ENCODE measurements at regions of chr5 and their contacts with region 1.

Region 1: DNA sequence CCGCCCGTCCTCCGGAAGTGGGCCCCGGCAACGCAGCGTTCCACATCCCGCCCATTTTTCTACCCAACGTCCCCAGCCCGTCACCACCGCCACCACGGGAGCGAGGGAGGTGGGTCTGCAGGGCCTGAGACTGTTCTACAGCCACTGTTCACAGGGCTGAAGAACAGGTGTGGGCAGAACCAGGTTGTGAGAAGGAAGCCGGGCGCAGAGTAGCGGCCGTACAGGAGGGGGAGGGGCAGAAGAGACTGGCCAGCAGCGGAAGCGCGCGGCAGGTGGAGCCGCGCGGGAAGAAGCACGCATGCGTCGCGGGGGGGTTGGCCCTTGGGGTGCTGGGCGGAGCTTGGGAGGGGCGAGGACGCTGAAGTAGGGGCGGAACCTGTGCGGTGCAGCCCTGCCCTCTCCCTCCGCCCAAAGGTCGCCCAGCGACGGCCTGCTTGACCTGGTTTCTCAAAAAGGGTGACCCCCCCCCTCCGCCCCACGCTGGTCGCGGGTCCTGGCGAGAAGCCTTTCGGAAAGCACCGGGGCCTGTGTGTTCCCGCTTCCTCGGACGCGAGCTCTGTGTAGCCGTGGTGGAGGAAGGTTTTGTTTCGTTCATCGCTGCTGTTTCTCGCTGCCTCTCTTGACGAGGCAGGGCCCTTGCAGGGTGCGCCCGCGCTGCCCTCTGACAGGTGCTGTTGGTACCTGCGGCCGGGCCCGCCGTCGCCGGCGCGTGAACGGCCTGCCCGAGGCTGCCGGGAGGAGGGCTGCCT is 7.8 kb upstream of the MGAT1 start:
- DNase-seq: peak; percentile 90
- ATAC-seq: peak; percentile 91
- H3K4me3 ChIP-seq: peak overlapping the region; percentile 84
- H3K27ac ChIP-seq: peak overlapping the region; percentile 99
- H3K4me1 ChIP-seq: peaks cover 10% of the 10 kb centered on the region
- H3K27me3 ChIP-seq: no peaks in the 10 kb centered on the region
- CTCF ChIP-seq: no peak
- POLR2A ChIP-seq: peak; percentile 73
- RAD21 ChIP-seq: no peak

Region 2: GRCh38 chr5:180831139-180832048 is 21.0 kb after region 1 on chr5:
- CTCF ChIA-PET with region 1: interaction called, 4 read pairs
- POLR2A ChIA-PET with region 1: interaction called, 3 read pairs
- dilution Hi-C with region 1: no loop called
- in situ Hi-C with region 1: no loop called
- intact Hi-C with region 1: loop called (anchors 1 kb)
- DNase-seq: peak; percentile 60
- ATAC-seq: peak; percentile 98
- H3K4me3 ChIP-seq: peak overlapping the region; percentile 90
- H3K27ac ChIP-seq: peak overlapping the region; percentile 89
- H3K4me1 ChIP-seq: peaks cover 9% of the 10 kb centered on the region
- H3K27me3 ChIP-seq: no peaks in the 10 kb centered on the region
- CTCF ChIP-seq: no peak
- POLR2A ChIP-seq: no peak
- RAD21 ChIP-seq: no peak

Region 3: GRCh38 chr5:181001947-181002346 is 191.6 kb after region 1 on chr5:
- CTCF ChIA-PET with region 1: no interaction called
- POLR2A ChIA-PET with region 1: no interaction called
- dilution Hi-C with region 1: no loop called
- in situ Hi-C with region 1: no loop called
- intact Hi-C with region 1: no loop called
- DNase-seq: no peak
- ATAC-seq: no peak
- H3K4me3 ChIP-seq: no peak overlapping the region
- H3K27ac ChIP-seq: no peak overlapping the region
- H3K4me1 ChIP-seq: no peaks in the 10 kb centered on the region
- H3K27me3 ChIP-seq: no peaks in the 10 kb centered on the region
- CTCF ChIP-seq: no peak
- POLR2A ChIP-seq: no peak
- RAD21 ChIP-seq: no peak

Region 4: DNA sequence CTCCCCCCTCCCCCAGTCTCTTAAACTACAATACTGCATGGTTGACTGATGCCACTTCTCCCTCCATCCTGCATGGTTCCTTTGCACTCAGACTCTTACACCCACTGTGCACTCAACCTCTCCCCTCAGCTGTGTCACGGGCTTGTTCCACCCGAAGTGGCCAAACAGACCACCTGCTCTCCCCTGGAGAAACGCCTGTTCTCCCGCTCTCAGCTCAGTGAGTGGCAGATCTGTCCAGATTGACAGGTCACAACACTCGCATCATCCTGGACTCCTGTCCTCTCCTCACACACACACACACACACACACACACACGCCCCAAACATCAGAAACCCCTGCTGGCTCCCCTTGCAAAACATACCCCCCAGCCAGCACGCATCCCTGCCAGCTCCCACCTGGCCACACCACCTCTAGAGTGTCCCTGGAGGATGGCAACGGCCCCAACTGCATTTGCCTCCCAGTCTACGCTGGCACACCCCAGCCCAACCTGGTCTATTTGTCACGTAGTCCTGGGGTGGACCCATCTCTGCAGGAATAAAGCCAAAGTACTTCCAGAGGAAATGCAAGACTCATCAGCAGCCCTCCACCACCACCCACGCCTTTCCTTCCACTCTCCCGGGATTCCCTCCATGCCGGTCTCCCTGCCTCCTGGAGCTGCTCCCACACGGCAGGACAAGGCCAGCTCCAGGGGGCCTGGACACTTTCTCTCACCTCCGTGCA is 317.7 kb after region 1 on chr5:
- CTCF ChIA-PET with region 1: no interaction called
- POLR2A ChIA-PET with region 1: no interaction called
- dilution Hi-C with region 1: no loop called
- in situ Hi-C with region 1: no loop called
- intact Hi-C with region 1: no loop called
- DNase-seq: no peak
- ATAC-seq: no peak
- H3K4me3 ChIP-seq: no peak overlapping the region
- H3K27ac ChIP-seq: no peak overlapping the region
- H3K4me1 ChIP-seq: no peaks in the 10 kb centered on the region
- H3K27me3 ChIP-seq: peaks cover 4% of the 10 kb centered on the region; the same call in 1 of the 2 replicates
- CTCF ChIP-seq: no peak
- POLR2A ChIP-seq: no peak
- RAD21 ChIP-seq: no peak

Region 5: DNA sequence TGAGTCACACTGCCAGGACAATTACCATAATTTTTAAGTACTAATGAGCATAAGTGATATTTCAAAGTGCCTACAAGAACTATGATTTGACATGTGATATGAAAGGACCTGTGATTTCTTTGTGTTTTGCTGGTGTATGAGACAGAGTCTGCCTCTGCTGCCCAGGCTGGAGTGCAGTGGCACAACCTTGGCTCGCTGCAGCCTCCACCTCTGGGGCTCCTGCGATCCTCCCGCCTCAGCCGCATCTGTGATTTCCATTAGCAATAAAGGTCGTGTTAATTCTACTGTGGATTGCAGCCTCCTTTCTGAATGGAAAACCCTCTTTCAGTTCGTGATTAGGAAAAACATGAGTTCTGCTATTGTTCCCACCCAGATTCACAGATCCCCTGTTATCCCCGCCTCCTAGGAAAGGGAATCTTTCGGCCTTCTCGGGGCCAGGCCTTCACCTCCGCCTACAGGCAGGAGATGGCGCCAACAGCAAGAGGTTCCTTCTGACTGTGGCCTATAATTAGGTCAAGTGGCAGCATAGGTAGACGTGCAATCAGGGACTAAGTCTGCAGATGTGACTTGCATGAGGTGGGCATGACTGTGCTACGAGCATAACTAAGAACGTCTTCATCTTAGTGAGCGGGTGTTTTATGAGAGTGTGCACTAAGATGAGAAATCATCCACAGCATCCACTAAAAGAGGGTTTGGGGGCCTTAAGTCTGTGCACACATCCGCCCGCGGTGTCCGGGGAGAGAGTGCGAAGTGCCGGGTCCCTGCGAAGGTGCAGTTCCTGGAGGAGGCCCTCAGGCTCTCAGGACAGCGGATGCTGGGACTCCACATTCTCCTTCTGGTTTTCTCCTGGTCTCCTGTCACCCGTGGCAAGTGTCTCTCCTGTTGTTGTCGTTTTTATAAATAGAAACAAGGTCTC is 371.5 kb after region 1 on chr5:
- CTCF ChIA-PET with region 1: no interaction called
- POLR2A ChIA-PET with region 1: no interaction called
- dilution Hi-C with region 1: no loop called
- in situ Hi-C with region 1: loop called (anchors 10 kb)
- intact Hi-C with region 1: no loop called
- DNase-seq: peak; percentile 65
- ATAC-seq: peak; percentile 69
- H3K4me3 ChIP-seq: no peak overlapping the region
- H3K27ac ChIP-seq: no peak overlapping the region
- H3K4me1 ChIP-seq: no peaks in the 10 kb centered on the region
- H3K27me3 ChIP-seq: no peaks in the 10 kb centered on the region
- CTCF ChIP-seq: peak; percentile 80
- POLR2A ChIP-seq: no peak
- RAD21 ChIP-seq: peak; percentile 79

Region 6: DNA sequence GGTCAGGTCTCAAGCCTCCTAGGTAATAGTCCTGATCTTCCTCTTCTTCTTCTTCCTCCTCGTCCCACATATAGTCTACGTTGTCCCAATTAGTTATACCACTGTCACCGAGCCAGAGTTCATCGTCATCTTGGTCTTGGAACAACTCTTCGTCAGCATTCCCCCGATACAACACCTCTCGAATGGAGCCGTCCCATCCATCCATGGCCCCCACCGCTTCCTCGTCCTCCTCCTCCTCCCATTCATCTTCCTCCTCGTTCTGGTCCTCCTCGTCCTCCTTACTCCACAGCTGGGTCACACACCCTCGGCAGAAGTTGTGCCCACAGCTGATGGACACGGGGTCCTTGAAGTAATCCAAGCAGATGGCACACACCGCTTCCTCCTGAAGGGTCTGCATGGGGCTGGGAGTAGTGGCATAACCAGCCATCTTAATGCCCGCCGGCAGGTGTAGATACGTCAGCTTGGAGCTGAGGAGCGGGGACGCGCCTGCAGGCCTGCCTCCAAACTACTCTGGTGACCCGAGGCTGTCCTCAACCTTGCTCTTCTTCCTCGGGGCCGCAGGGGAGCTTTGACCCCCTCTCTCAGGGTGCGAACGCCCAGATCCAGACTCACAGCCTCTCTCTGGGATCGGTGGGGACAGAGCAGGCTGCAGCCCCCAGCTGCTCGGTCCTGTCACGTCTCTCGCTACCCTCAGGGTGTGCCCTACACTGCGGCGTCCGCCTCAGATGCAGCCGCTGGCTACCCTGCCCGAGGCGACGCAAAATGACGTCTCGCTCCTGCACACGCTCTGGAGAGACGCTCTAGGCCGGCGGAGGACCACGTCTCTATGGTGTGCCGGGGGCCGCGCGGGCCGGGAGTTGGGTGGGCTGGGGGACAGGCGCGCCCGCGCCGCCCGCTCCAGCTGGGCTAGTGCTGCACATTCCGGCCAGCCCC is 450.3 kb after region 1 on chr5 and contains the start of gene TRIM52:
- CTCF ChIA-PET with region 1: no interaction called
- POLR2A ChIA-PET with region 1: interaction called, 5 read pairs
- dilution Hi-C with region 1: no loop called
- in situ Hi-C with region 1: loop called (anchors 10 kb)
- intact Hi-C with region 1: no loop called
- DNase-seq: peak; percentile 87
- ATAC-seq: peak; percentile 87
- H3K4me3 ChIP-seq: peak within 1 kb of the TSS; percentile 95
- H3K27ac ChIP-seq: peak within 1 kb of the TSS; percentile 97
- H3K4me1 ChIP-seq: peaks cover 2% of the 10 kb centered on the region; the same call in 1 of the 2 replicates
- H3K27me3 ChIP-seq: no peaks in the 10 kb centered on the region
- CTCF ChIP-seq: 0 out of 2 replicates have a peak, but pooled peaks have one; percentile 1
- POLR2A ChIP-seq: peak; percentile 77; the same call in 1 of the 2 replicates
- RAD21 ChIP-seq: no peak; the same call in 1 of the 2 replicates
- total RNA-seq, gene TRIM52: 2.3 and 3.9 TPM in 2 replicates

Measured in IMR-90 (cell line).